ENCODE measurements at regions of chr15 and their contacts with region 1.

Region 1: DNA sequence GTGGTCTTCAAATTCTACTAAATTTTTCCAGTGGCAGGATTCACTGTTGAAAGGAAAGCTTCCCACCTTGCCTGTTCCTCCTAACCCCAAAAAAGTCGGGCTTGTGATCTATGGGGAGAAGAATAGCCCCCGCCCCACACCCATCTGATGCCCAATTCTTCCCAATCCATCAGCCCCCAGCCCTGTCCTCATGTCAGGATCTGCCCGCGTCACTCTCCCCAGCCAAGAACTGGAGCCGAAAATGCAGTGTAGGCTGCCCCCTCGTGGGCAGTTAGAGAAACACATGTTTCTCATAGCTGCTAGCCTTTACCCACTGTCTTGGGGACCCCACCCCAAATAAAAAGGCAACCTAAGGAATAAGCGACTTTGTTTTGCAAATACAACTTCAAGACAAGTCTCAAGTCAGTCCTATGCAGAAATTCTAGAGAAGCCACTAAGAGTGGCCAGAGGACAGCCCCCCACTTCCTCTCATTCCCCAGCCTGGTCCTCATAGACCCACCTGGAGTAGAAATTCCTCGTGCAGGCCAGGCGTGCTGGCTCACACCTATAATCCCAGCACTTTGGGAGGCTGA is 13.0 kb upstream of the CSK start:
- DNase-seq: peak; percentile 82
- H3K27ac ChIP-seq: no peak overlapping the region
- CTCF ChIP-seq: peak; percentile 90

Region 2: GRCh38 chr15:74725845-74726773 is 42.7 kb before region 1 on chr15:
- CTCF ChIA-PET with region 1: interaction called, 11 read pairs
- POLR2A ChIA-PET with region 1: no interaction called
- DNase-seq: peak; percentile 34
- H3K27ac ChIP-seq: peak overlapping the region; percentile 57
- CTCF ChIP-seq: no peak

Region 3: DNA sequence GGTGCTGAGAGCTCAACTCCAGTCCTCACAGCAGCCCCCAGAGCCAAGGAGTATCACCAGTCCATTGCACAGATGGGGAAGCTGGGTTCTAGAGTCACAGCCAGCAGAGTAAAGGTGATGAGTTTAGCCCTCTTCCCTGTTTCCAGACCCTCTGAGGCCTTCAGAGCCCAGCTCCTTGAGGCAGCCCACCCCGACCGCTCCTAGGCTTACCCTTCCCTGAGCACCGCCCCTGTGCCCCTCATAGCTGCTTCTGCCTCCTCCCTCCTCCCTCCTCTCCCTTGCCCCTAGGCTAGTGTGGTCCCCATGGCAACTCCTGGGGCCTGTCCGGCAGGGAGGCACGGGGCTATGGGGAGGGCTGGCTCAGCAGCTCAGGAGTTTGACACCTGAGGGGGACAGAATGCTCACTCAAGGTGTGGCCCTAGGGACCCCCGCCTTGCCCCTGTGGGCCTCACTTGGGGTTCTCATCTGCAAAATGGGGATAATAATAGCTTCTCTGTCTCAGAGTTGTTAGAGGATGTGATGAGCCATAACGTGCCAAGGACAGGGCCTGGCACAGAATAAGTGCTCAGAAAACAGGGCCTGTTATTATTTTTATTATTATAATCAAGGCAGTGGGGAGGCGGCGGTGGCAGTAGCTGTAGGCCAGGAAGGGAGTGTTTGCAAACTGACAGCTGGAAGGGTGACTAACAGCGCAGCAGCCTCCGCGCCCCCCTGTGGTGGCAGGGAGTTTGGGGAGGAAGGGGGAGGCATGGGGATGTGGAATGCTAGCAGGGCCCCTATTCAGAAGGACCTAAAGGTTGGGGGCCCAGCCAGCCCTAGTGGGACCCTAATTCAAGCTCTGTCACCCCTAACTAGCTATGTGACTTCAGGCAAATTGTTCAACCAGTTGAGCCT is 24.5 kb after region 1 on chr15:
- CTCF ChIA-PET with region 1: interaction called, 12 read pairs
- POLR2A ChIA-PET with region 1: no interaction called
- DNase-seq: no peak
- H3K27ac ChIP-seq: peak overlapping the region; percentile 11
- CTCF ChIP-seq: no peak

Region 4: DNA sequence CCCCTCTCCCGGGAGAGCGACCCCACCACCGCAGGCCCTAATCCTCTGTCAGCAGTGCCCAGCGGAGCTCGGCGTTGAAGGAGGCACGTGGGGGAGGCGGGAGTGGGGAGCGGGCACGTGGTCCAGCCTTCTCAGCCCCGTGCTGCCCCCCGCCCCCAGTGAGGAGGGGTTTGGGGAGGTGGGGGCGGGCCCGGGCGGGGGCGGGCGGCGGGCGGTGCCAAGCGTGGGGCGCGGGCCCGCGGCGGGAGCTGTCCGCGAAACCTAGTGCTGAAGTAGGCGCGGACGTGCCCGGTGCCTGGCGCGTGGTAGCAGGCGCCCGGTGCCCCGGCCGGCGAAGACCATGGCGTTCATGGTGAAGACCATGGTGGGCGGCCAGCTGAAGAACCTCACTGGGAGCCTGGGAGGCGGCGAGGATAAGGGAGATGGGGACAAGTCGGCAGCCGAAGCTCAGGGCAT is 57.5 kb after region 1 on chr15 and contains the start of gene CPLX3:
- CTCF ChIA-PET with region 1: interaction called, 16 read pairs
- POLR2A ChIA-PET with region 1: no interaction called
- DNase-seq: peak; percentile 60
- H3K27ac ChIP-seq: no peak within 1 kb of the TSS
- CTCF ChIP-seq: no peak

Region 5: DNA sequence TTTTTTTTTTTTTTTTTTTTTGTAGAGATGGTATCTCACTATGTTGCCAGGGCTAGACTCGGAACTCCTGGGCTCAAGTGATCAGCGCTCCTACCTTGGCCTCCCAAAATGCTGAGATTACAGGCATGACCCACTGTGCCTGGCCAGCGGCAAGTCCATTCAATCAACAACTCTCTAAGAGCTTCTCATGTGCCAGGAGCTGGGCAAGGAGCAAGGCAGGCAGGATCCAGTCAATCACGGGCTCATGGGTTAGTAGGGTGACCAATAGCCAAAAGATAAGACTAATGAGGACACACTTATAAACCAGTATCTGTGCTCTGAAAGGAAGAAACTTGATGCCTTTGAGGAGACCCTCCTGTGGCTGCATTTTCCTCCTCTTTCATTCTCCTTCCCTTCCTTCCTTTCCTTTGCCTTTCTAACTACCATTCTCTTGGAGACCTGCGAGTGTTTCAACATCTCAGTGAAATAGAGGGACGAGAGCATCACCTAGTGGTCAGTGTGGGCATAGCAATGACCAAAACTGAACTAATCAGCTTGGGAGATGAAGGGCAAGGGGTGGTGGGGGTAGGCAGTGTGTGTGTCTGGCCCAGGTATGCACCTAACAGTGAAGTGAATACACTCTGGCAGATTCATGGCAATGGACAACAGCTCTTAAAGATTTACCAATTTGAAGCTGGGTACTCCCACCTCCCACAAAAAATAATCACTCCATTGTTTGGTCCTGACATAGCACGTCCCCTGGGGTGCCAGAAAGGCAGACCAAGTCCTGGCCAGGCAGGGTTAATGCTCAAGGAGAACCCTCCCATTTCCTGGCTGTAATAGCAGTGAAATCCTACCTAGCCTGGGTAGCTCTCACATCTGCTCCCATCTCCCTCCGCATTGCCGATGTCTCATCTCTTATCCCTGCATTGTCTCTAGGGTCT is 181.5 kb after region 1 on chr15:
- CTCF ChIA-PET with region 1: interaction called, 38 read pairs
- POLR2A ChIA-PET with region 1: no interaction called
- DNase-seq: peak; percentile 78
- H3K27ac ChIP-seq: peak overlapping the region; percentile 63
- CTCF ChIP-seq: peak; percentile 100

Region 6: DNA sequence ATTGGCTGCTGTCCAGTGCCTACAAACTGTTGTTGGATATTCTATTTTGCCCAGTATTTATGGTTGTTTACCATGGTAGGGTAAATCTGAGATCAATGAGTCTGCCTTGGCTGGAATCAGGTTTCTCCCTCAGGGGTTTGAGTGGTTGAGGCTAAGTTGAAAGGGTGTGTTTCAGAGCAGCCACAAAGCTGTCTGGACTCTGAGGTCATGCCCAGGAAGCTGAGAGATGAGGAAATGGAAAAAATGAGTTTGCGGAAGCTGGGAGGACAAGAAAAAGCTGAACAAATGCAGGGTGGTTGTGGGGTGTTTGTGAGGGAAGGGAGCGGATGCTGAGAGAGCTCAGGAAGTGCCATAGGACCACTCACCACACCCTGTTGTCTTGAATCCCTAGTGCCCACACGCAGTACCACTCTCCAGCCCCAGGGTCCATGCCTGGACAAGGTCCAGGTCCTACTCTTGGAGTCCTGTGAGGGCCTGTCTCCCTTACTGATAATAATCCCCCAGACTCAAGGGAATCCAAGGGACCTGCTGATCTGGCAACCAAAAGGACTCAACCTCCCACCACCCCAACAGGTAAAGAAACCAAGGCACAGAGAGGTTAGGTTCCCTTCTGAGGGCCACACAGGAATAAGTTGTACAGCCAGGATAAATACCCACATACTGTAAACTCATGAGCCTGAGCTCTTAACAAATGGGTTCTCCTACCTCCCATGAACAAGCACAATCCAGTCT is 336.1 kb after region 1 on chr15:
- CTCF ChIA-PET with region 1: interaction called, 11 read pairs
- POLR2A ChIA-PET with region 1: no interaction called
- DNase-seq: peak; percentile 94
- H3K27ac ChIP-seq: peak overlapping the region; percentile 67
- CTCF ChIP-seq: no peak